RWPE1 (cell line): ENCODE measurements at regions of chr12 and their contacts with region 1.

Region 1: DNA sequence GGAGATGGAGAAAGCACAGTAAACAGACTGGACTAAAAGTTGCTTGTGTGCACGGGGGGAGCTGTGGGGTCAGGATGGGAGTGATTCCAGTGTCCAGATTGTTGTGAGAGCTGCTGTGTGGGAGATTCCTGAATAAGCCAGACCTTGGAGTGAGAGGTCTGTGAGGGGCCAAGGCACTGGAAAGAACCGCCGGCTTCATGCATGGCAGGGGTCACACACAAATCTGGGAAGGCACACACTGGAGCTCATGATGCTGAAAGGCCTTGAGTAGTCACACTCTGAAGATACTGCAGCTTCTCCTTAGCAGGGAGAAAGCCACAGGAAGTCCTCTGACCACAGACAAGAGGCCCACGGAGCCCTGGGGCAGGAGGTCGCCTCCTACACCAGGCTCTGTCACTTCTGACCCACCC is 23.1 kb downstream of the ADCY6 start:
- DNase-seq: no peak
- H3K27ac ChIP-seq: peak overlapping the region; percentile 51
- CTCF ChIP-seq: no peak

Region 2: GRCh38 chr12:48716493-48717251 is 49.1 kb before region 1 on chr12 and contains the start of gene CCNT1:
- CTCF ChIA-PET with region 1: no interaction called
- POLR2A ChIA-PET with region 1: no interaction called
- DNase-seq: peak; percentile 100
- H3K27ac ChIP-seq: peak within 1 kb of the TSS; percentile 93
- CTCF ChIP-seq: no peak

Region 3: DNA sequence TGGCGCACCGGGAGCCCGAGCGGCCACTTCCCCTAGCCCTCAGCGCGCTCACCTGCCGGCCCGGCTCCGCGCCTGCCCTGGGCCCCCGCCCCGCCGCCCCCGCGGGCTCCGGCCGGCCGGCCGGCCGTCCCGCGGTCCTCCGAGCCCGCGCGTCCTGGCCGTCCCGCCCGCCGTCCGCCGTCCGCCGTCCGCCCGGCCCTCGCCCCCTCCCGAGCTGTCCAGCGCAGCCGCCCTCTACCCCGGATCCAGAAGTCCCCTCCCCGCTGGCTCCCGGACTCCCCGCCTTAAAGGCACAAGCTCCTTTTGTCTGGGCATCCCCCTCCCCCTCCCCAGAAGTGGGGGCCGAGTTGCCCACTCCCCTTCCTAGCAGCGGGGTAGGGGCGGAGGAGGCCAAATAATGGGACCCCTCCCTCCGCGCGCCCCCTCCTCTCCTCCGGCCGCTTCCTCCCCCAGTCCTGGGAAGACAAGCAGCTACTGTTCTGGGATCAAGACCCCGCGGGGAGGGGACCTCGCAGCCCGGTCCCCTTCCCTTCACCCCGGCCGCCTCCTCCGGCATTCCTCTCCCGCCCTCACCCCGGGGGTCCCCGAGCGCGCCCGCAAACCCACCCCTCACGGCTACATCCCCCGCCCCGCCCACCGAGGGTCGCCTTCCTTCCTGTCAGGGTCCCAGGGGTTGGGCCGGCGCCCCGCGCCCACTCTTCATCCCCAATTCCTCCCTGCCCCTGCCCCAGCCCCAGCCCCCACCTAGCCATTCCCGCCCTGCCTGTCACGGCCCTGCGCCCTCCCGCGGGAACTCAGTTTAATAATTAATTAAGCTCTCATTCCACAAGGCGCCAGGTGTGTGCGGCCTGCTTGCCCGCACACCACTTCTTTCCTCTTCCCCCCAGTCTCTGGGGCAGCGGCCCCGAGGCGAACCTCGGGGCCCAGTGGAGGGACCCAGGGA is 23.4 kb after region 1 on chr12 and contains the start of gene ADCY6:
- CTCF ChIA-PET with region 1: interaction called, 4 read pairs
- POLR2A ChIA-PET with region 1: interaction called, 12 read pairs
- DNase-seq: peak; percentile 67
- H3K27ac ChIP-seq: peak within 1 kb of the TSS; percentile 79
- CTCF ChIP-seq: no peak

Region 4: DNA sequence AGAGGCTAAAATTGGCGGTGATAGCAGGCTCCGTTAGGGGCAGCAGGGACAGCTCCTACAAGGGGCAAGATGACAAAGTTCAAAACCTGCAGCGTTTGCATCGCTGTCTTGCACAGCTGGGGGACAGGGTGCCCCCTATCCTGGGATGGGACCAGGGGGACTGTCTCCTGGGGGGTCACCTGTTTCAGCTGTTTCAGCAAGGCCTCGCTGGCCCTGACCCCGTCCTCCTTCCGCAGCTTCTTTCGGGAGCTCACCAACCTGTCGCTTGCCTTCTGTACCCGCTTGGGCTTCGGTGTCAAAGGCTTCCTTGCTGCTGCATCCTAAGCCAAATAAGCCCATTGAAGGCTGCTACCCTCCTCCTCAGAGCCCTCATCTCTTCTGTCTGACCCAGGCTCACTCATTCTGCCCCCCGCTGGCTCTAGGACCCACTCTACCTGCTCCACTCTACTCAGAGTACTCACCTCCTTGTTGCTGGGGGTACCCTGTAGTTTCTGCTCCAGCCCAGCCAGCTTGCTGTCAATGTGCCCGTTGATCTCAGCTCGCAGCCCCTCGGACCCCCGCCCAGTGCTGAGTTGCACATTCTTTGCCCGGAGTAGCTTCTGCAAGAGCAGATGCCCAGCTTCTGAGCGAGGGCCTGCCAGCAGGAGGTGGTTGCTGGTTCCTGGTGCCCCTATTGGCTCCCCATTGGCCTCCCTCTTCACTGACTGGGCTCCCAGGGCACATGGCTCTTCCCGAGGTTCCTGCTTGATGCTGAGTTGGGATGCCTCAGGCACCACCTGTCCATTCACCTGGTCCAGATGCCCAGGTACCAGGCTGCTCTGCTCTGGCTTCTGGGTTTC is 265.2 kb after region 1 on chr12:
- CTCF ChIA-PET with region 1: no interaction called
- POLR2A ChIA-PET with region 1: interaction called, 11 read pairs
- DNase-seq: no peak
- H3K27ac ChIP-seq: no peak overlapping the region; the same call in 1 of the 2 replicates
- CTCF ChIP-seq: no peak